Activated CD4-positive, alpha-beta T cell treated with anti-CD3 and anti-CD28 coated beads, Interleukin-2, amount 10 ng/mL, durations not matched to agents 24 days and 14 days (primary cell): ENCODE measurements at regions of chr3 and their contacts with region 1.

Region 1: DNA sequence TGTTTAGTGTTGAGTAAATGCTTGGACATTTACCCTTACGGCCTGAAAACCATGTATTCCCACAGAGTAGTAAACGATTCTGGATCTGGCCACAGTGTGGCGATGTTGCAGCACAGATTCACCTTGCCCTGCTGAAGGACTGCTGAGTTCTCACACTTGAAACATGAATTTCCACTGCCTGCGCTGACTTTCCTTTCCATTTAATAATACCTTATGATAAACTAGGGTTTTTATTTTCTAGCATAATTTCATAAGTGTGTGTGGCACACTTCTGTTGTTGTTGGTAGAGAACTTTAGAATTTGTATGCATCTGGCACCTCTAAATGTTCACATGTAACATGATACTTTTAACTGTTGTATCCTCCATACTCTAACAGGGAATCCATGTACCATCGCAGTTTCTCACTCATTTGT is 53.9 kb downstream of the C3orf38 start:
- DNase-seq: peak; percentile 84
- H3K4me3 Mint-ChIP-seq: no peak overlapping the region
- H3K27ac Mint-ChIP-seq: no peak overlapping the region
- H3K4me1 Mint-ChIP-seq: no peaks in the 10 kb centered on the region
- H3K27me3 Mint-ChIP-seq: peaks cover 4% of the 10 kb centered on the region

Region 2: GRCh38 chr3:88141458-88142083 is 62.1 kb before region 1 on chr3:
- intact Hi-C with region 1: no loop called
- DNase-seq: no peak
- H3K4me3 Mint-ChIP-seq: no peak overlapping the region
- H3K27ac Mint-ChIP-seq: no peak overlapping the region
- H3K4me1 Mint-ChIP-seq: peaks cover 1% of the 10 kb centered on the region
- H3K27me3 Mint-ChIP-seq: no peaks in the 10 kb centered on the region

Region 3: DNA sequence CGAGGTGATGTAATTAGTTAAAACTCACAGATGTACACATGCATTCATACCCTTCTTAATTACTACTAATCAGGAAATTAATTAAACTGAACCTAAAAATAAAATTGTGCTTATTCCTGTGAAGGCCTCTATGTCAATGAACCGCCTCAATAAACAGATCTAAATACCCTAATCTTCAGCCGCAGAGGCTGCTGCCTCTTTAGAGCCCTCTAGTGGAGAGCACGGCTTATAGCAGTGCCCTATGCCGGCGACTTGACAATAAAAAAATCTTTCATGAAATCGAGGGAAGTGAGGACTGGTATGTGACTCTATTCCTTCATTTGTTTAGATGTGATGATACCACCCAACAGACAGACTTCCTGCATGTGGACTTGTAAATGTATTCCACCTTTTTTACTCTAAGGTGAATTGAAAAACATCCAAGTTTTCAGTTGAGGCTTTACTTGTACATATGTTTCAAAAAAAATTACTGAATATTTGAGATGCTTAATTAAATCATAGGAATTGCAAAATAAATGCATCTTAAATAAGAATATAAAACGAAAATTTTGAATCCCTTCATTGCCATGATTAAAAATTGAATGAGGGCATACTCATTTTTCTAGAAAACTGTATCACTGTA is 895.4 kb after region 1 on chr3:
- intact Hi-C with region 1: loop called (anchors 1 kb)
- DNase-seq: peak; percentile 79
- H3K4me3 Mint-ChIP-seq: no peak overlapping the region
- H3K27ac Mint-ChIP-seq: no peak overlapping the region
- H3K4me1 Mint-ChIP-seq: no peaks in the 10 kb centered on the region
- H3K27me3 Mint-ChIP-seq: no peaks in the 10 kb centered on the region

Region 4: GRCh38 chr3:90184861-90185260 is 1981.2 kb after region 1 on chr3:
- intact Hi-C with region 1: loop called (anchors 10 kb)
- DNase-seq: no peak
- H3K4me3 Mint-ChIP-seq: no peak overlapping the region
- H3K27ac Mint-ChIP-seq: no peak overlapping the region
- H3K4me1 Mint-ChIP-seq: peaks cover 2% of the 10 kb centered on the region
- H3K27me3 Mint-ChIP-seq: no peaks in the 10 kb centered on the region